ENCODE measurements at regions of chr15 and their contacts with region 1.

Region 1: GRCh38 chr15:33132722-33133345 is 61.7 kb downstream of the FMN1 start:
- DNase-seq: peak; percentile 37 to 48
- H3K4me3 ChIP-seq: no peak overlapping the region
- H3K27ac ChIP-seq: no peak overlapping the region
- H3K4me1 ChIP-seq: peaks cover 12% of the 10 kb centered on the region
- H3K27me3 ChIP-seq: no peaks in the 10 kb centered on the region
- CTCF ChIP-seq: peak; percentile 61

Region 2: GRCh38 chr15:32657198-32657883 is 475.5 kb before region 1 on chr15:
- CTCF ChIA-PET with region 1: interaction called, 5 read pairs
- POLR2A ChIA-PET with region 1: interaction called, 3 read pairs
- intact Hi-C with region 1: loop called (anchors 1 kb)
- DNase-seq: peak in 1 of 2 experiments; percentile 21
- H3K4me3 ChIP-seq: no peak overlapping the region
- H3K27ac ChIP-seq: no peak overlapping the region
- H3K4me1 ChIP-seq: peaks cover 19% of the 10 kb centered on the region
- H3K27me3 ChIP-seq: no peaks in the 10 kb centered on the region
- CTCF ChIP-seq: no peak

Region 3: GRCh38 chr15:33021806-33022389 is 110.9 kb before region 1 on chr15:
- CTCF ChIA-PET with region 1: interaction called, 19 read pairs
- POLR2A ChIA-PET with region 1: no interaction called
- intact Hi-C with region 1: loop called (anchors 1 kb)
- DNase-seq: no peak
- H3K4me3 ChIP-seq: no peak overlapping the region
- H3K27ac ChIP-seq: peak overlapping the region; percentile 43
- H3K4me1 ChIP-seq: peaks cover 13% of the 10 kb centered on the region
- H3K27me3 ChIP-seq: no peaks in the 10 kb centered on the region
- CTCF ChIP-seq: peak; percentile 66

Region 4: DNA sequence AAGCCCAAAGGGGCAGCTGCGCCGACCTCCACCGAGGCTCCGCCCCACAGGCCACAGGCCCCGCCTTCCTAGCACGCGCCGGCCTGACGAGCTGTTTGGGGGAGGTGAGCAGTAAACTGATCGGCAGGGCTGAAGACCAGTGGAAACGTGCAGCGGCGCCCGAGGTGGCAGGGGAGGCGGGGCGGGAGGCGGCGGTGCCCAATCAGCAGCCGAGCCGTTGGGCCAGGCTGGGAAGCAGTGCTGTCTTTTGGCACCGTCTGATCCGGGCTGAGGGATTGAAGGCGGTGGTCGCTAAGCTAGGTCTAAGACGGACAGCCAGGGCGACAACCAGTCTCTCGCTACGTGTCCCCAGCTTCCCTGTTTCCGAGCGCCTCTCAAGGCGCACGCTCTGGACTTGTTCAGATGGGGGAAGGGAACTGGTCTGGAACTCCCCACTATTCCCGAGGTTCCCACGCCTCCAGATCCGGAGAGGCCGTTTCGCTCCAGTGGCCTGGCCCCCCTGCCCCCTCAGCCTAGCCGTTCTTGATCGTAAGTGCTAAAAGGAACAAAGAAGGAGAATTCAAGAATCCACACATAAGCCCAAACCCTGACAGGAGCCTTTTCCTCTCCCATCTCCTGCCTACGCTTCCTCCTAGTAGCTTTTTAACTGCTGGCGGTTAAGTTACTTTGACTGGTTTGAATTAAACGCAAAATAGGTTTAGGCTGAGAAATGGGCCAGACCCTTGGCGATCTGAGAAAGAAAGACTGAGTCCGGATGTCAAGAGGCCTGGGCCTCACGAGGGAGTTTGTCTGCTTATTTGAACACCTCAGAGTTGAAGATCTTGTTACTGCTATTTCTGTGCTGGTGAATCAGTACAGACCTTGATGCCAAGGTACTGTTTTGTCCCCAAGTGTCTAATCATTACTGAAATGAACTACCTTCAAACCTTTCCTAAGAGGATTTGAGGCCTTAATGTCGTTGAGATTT is 62.2 kb after region 1 on chr15 and contains the start of gene FMN1:
- CTCF ChIA-PET with region 1: interaction called, 11 read pairs
- POLR2A ChIA-PET with region 1: no interaction called
- intact Hi-C with region 1: loop called (anchors 10 kb)
- DNase-seq: peak; percentile 75 to 94
- H3K4me3 ChIP-seq: peak within 1 kb of the TSS; percentile 66
- H3K27ac ChIP-seq: peak within 1 kb of the TSS; percentile 57
- H3K4me1 ChIP-seq: peaks cover 8% of the 10 kb centered on the region
- H3K27me3 ChIP-seq: no peaks in the 10 kb centered on the region
- CTCF ChIP-seq: no peak
- total RNA-seq, gene FMN1: 19.6 and 25.8 TPM in 2 replicates

Region 5: DNA sequence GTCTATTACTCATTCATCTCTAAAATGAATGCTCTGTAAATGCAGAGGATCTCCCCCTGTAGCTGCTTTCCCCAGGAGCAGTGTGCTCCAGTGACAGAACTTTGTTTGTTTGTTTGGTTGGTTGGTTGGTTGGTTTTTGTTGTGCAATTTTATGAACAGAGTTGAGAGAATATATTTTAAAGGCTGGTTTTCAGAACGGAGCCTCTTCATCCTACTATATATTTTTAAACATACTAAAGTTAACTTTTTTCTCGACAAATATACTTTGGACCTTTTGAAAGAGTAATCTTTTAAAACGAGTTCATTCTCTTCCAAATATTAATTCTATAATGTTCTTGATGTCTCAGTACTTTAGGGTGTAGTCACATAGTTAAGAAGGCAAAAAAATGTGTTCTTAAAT is 198.1 kb after region 1 on chr15:
- CTCF ChIA-PET with region 1: no interaction called
- POLR2A ChIA-PET with region 1: no interaction called
- intact Hi-C with region 1: no loop called
- DNase-seq: no peak
- H3K4me3 ChIP-seq: no peak overlapping the region
- H3K27ac ChIP-seq: no peak overlapping the region
- H3K4me1 ChIP-seq: no peaks in the 10 kb centered on the region
- H3K27me3 ChIP-seq: no peaks in the 10 kb centered on the region
- CTCF ChIP-seq: no peak